ENCODE measurements at regions of chr18 and their contacts with region 1.

Region 1: DNA sequence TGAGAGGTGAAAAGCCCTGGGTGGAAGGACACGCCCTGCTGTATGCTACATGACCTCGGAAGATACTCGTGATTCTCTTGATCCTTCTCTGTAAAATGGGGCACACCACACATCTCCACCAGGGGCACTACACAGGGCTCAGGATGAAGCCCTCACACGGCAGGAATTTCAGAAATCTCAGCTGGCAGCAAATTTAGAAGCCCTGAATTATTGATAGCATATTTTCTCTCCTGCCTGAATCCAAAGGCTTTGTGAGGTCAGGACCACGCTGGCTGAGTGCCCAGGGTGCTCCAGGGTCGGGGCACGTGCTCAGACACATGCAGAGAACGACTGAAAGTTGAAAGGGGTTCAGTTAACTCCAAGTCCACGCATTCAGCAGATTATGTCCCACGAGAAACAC is 42.1 kb upstream of the GALR1 start:
- DNase-seq: peak; percentile 42
- ATAC-seq: peak; percentile 90
- H3K4me3 ChIP-seq: no peak overlapping the region
- H3K27ac ChIP-seq: no peak overlapping the region
- H3K4me1 ChIP-seq: no peaks in the 10 kb centered on the region
- H3K27me3 ChIP-seq: peaks cover 2 to 19% of the 10 kb centered on the region in 2 experiments; a peak in 3 of 5 replicates
- CTCF ChIP-seq: no peak
- EP300 ChIP-seq: no peak
- POLR2A ChIP-seq: no peak
- RAD21 ChIP-seq: no peak

Region 2: GRCh38 chr18:76991021-76991688 is 216.4 kb before region 1 on chr18:
- CTCF ChIA-PET with region 1: no interaction called
- POLR2A ChIA-PET with region 1: no interaction called
- in situ Hi-C with region 1: loop called (anchors 10 kb)
- intact Hi-C with region 1: no loop called
- DNase-seq: no peak
- ATAC-seq: no peak
- H3K4me3 ChIP-seq: no peak overlapping the region
- H3K27ac ChIP-seq: no peak overlapping the region
- H3K4me1 ChIP-seq: peaks cover 32% of the 10 kb centered on the region
- H3K27me3 ChIP-seq: no peaks in the 10 kb centered on the region; a peak in 1 of 5 replicates
- CTCF ChIP-seq: no peak
- EP300 ChIP-seq: no peak
- POLR2A ChIP-seq: no peak
- RAD21 ChIP-seq: no peak

Region 3: DNA sequence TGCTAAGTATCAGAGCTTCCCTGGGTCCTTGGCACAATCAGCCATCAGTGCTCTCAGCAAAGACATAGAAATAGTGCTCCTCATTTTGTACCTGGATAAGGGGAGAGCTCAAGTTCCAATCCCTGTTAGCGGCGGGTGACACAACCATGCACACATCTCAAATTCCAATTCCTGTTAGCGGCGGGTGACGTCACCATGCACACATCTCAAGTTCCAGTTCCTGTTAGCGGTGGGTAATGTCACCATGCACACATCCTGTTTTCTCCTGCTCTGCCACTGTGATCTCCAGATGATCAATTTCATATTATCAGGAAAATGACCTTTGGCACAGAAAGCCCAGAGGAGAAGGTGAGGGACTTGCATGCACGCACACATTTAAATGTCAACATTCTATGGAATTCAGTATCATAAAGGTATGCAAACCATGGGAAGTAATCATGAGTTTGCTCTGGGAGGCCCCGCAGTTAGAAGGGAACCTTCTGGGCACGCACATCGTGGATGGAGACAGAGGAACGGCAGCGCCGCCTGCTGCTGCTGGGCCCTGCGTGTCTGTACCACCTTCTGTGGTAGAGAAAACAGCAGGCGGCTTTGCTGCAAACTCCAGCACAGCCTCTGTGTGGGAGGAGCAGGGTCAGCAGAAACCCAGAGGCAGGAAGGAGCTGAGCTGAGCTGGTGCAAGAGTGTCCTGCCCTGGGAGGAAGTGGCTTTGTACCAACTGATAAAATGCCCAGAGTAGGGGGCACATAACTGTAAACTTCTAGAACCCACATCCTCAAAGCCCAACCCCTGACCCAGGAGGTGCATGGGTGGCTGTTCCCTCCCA is 152.7 kb before region 1 on chr18:
- CTCF ChIA-PET with region 1: no interaction called
- POLR2A ChIA-PET with region 1: no interaction called
- in situ Hi-C with region 1: no loop called
- intact Hi-C with region 1: loop called (anchors 1 kb)
- DNase-seq: peak; percentile 87
- ATAC-seq: peak; percentile 92
- H3K4me3 ChIP-seq: peak overlapping the region in 1 of 3 experiments; percentile 58; a peak in 3 of 6 replicates
- H3K27ac ChIP-seq: peak overlapping the region; percentile 72
- H3K4me1 ChIP-seq: peaks cover 43% of the 10 kb centered on the region
- H3K27me3 ChIP-seq: no peaks in the 10 kb centered on the region
- CTCF ChIP-seq: peak; percentile 93
- EP300 ChIP-seq: peak in 1 of 2 experiments; percentile 28; a peak in 1 of 4 replicates
- POLR2A ChIP-seq: no peak
- RAD21 ChIP-seq: peak; percentile 82

Region 4: GRCh38 chr18:77337604-77338003 is 130.1 kb after region 1 on chr18:
- CTCF ChIA-PET with region 1: no interaction called
- POLR2A ChIA-PET with region 1: no interaction called
- in situ Hi-C with region 1: no loop called
- intact Hi-C with region 1: no loop called
- DNase-seq: no peak
- ATAC-seq: no peak
- H3K4me3 ChIP-seq: no peak overlapping the region
- H3K27ac ChIP-seq: no peak overlapping the region
- H3K4me1 ChIP-seq: no peaks in the 10 kb centered on the region
- H3K27me3 ChIP-seq: peaks cover 0 to 22% of the 10 kb centered on the region in 2 experiments; a peak in 2 of 5 replicates
- CTCF ChIP-seq: no peak
- EP300 ChIP-seq: no peak
- POLR2A ChIP-seq: no peak
- RAD21 ChIP-seq: no peak